Panc1 (cell line): ENCODE measurements at regions of chr22 and their contacts with region 1.

Region 1: DNA sequence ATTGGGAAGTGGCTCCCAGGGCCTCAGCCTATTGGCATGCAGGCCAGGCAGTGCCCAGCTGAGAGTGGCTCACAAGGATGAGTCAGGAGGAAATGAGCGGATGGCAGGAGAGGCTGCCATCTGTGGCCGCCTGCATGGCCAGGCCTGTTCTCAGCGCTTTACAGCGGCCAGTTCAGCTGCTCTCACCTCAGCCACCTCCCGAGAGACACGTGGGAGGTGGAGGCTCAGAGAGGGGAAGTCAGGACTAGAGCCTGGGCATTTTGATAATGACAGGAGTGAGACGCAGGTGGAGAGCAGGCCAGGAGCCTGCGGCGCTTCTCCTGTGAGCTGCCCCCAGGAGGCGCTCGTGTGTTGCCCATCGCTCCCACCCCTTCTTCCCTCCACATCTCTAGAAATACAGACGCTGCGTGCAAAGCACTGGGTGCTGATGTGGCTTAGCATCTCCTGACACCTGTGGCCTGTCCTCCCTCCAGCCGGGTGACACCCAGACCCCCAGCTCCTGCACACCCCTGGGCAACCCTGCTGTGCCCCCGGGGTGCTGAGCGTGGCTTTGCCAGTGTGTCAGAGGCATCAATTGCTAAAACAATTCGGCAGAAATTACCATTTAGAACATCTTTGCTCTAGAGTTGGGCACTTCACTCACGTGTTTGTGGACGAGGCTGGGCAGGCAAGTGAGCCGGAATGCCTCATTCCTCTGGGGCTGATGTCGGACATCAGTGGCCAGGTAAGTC is 21.4 kb upstream of the PANX2 start:
- DNase-seq: peak; percentile 61
- ATAC-seq: peak; percentile 91
- H3K4me3 ChIP-seq: no peak overlapping the region
- H3K27ac ChIP-seq: no peak overlapping the region
- H3K4me1 ChIP-seq: no peaks in the 10 kb centered on the region
- H3K27me3 ChIP-seq: no peaks in the 10 kb centered on the region
- CTCF ChIP-seq: peak; percentile 91

Region 2: DNA sequence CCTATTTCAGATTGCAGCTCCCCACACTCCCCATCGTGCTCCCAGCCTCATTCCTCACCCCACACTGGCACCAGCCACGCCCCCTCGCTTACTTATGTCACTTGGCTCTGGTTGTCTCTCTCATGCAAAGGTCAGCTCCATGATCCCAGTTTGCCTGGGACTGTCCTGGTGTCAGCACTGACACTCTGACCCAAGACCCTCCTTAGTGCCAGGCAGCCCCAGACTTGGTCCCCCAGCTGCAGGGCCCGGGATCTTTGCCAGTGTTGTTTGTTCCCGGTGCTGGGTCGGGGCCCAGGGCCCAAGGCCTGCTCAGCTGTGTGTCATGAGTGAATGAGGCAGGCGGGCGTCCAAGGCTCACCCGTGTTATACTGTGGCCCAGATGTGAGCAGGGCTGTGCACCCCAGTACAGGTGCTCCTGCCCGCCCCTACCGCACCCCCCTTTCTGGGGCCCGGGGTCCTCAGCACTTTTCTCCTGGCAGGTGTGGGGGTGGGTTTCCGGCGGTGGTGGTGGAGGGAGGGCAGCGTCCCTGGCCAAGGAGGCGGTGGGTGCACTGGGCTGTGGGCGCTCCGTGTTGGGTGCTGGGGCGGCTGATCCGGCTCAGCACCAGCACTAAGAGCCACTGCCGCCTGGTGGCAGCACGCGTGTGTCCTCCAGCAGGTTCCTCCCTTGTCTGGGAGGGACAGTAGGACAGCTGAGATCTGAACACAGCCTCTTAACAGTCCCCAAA is 156.1 kb before region 1 on chr22:
- CTCF ChIA-PET with region 1: no interaction called
- POLR2A ChIA-PET with region 1: no interaction called
- in situ Hi-C with region 1: no loop called
- intact Hi-C with region 1: no loop called
- DNase-seq: no peak
- ATAC-seq: peak; percentile 86
- H3K4me3 ChIP-seq: no peak overlapping the region
- H3K27ac ChIP-seq: no peak overlapping the region
- H3K4me1 ChIP-seq: peaks cover 24% of the 10 kb centered on the region
- H3K27me3 ChIP-seq: no peaks in the 10 kb centered on the region
- CTCF ChIP-seq: peak; percentile 85

Region 3: DNA sequence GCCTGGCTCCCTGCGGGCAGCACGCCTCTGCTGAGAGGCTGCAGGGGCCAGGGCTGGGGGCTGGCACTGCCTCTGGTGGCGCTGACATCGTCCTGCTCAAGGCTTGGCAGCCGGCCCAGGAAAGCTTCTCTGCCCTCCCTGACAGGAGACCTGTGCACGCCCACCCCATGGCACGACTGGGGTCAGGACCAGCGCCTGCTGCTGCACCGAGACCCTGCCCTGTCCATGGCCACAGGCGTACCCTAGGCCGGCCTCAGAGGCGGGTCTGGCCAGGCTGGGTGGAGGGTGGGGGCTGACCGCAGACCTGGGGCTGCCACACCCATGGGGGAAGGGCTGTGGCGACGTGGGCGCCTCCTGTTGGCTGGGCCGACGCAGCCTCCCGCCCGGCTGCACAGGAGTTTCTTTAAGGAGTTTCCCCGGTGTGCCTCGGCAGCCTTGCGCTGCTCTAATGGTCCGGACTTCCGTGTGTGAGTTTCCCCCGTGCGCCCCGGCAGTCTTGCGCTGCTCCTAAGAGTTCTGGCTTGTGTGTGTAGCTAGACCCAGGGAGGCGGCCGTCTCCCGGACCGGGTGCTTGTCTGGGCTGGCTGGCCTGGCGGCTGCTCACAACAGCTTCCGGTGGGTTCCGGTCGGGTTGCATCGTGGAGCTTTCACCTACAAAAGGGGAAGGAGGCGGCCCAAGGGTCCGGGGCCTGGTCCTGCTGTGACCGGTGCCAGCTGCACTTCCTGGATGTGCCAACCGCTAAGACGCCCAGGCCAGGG is 41.2 kb after region 1 on chr22:
- CTCF ChIA-PET with region 1: interaction called, 4 read pairs
- POLR2A ChIA-PET with region 1: no interaction called
- in situ Hi-C with region 1: no loop called
- intact Hi-C with region 1: loop called (anchors 5 kb)
- DNase-seq: no peak
- ATAC-seq: peak; percentile 79
- H3K4me3 ChIP-seq: peak overlapping the region; percentile 36 to 55
- H3K27ac ChIP-seq: peak overlapping the region; percentile 73
- H3K4me1 ChIP-seq: peaks cover 35% of the 10 kb centered on the region
- H3K27me3 ChIP-seq: no peaks in the 10 kb centered on the region
- CTCF ChIP-seq: no peak; the same call in 1 of the 2 replicates

Region 4: DNA sequence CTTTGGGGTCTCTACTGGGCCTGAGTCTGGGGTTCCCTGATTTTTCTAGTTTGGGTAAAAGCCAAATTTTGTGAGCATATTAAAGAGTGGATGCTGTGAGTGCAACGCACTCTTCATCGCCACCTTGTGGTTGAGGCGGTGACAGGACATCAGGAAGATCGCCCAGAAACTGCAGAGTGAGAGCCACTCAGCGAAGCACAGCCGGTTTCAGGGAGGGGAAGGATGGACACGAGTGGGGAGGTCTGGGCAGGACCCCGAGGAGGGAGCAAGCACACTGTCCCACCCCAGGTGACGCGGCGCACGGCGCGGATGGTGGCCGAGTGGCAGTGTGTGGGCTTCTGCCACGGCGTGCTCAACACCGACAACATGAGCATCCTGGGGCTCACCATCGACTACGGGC is 60.7 kb after region 1 on chr22:
- CTCF ChIA-PET with region 1: no interaction called
- POLR2A ChIA-PET with region 1: no interaction called
- in situ Hi-C with region 1: no loop called
- intact Hi-C with region 1: loop called (anchors 1 kb)
- DNase-seq: peak; percentile 38
- ATAC-seq: peak; percentile 74
- H3K4me3 ChIP-seq: no peak overlapping the region
- H3K27ac ChIP-seq: no peak overlapping the region
- H3K4me1 ChIP-seq: no peaks in the 10 kb centered on the region
- H3K27me3 ChIP-seq: no peaks in the 10 kb centered on the region
- CTCF ChIP-seq: peak; percentile 87